ENCODE measurements at regions of chr15 and their contacts with region 1.

Region 1: DNA sequence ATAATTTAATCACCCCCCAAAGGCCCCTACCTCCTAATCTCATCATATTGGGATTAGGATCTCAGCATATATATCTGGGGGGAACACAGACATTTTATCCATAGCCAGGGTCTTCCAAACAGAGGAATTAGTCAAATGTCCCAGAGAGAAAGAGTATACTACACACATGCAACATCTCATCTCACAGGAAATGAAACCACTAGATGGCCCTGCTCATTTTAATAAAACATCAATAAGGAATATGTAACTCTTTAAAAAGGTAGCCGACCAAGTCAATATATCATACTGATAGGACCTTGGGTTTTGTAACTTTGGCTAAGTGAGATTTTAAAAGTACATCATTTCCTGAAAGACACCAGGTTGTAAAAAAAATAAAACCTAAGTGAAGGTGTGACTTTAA is 45.6 kb upstream of the THSD4 start:
- DNase-seq: peak; percentile 20
- ATAC-seq: no peak
- H3K4me3 ChIP-seq: no peak overlapping the region
- H3K27ac ChIP-seq: no peak overlapping the region
- H3K4me1 ChIP-seq: peaks cover 21% of the 10 kb centered on the region
- H3K27me3 ChIP-seq: no peaks in the 10 kb centered on the region
- CTCF ChIP-seq: peak; percentile 53

Region 2: GRCh38 chr15:71044006-71044405 is 25.7 kb before region 1 on chr15:
- CTCF ChIA-PET with region 1: no interaction called
- POLR2A ChIA-PET with region 1: no interaction called
- intact Hi-C with region 1: loop called (anchors 1 kb)
- DNase-seq: peak; percentile 57
- ATAC-seq: peak; percentile 81
- H3K4me3 ChIP-seq: no peak overlapping the region
- H3K27ac ChIP-seq: peak overlapping the region; percentile 39
- H3K4me1 ChIP-seq: peaks cover 27% of the 10 kb centered on the region
- H3K27me3 ChIP-seq: no peaks in the 10 kb centered on the region
- CTCF ChIP-seq: no peak

Measured in PC-3 (cell line).